IMR-90 (cell line): ENCODE measurements at regions of chr14 and their contacts with region 1.

Region 1: GRCh38 chr14:72904840-72905561 is 11.1 kb upstream of the DPF3 start:
- DNase-seq: peak; percentile 81
- ATAC-seq: peak; percentile 66
- H3K4me3 ChIP-seq: no peak overlapping the region
- H3K27ac ChIP-seq: no peak overlapping the region
- H3K4me1 ChIP-seq: peaks cover 18% of the 10 kb centered on the region
- H3K27me3 ChIP-seq: no peaks in the 10 kb centered on the region
- CTCF ChIP-seq: peak; percentile 95
- POLR2A ChIP-seq: no peak
- RAD21 ChIP-seq: peak; percentile 95

Region 2: DNA sequence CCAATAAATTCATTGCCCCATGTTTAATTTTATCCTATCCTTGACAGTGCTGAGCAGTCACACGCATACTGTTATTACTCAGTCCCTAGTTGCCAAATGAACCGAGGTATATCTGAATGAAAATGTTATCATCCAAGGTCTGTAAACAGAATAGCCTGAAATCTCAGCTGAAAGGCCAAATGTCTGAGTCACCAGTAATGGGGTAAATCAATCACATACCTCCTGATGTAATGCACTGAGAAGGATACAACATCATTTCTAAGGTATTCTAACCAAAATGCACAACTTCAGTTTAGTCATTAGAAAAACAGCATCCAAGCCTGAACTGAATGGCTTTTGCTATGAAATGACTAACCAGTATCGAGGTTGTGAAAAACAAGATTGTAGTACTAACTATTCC is 239.7 kb before region 1 on chr14:
- CTCF ChIA-PET with region 1: no interaction called
- POLR2A ChIA-PET with region 1: no interaction called
- dilution Hi-C with region 1: no loop called
- in situ Hi-C with region 1: no loop called
- intact Hi-C with region 1: loop called (anchors 5 kb)
- DNase-seq: peak; percentile 100
- ATAC-seq: peak; percentile 87
- H3K4me3 ChIP-seq: peak overlapping the region; percentile 33; the same call in 1 of the 2 replicates
- H3K27ac ChIP-seq: peak overlapping the region; percentile 82
- H3K4me1 ChIP-seq: peaks cover 23% of the 10 kb centered on the region
- H3K27me3 ChIP-seq: no peaks in the 10 kb centered on the region
- CTCF ChIP-seq: no peak
- POLR2A ChIP-seq: no peak
- RAD21 ChIP-seq: 0 out of 2 replicates have a peak, but pooled peaks have one; percentile 11

Region 3: DNA sequence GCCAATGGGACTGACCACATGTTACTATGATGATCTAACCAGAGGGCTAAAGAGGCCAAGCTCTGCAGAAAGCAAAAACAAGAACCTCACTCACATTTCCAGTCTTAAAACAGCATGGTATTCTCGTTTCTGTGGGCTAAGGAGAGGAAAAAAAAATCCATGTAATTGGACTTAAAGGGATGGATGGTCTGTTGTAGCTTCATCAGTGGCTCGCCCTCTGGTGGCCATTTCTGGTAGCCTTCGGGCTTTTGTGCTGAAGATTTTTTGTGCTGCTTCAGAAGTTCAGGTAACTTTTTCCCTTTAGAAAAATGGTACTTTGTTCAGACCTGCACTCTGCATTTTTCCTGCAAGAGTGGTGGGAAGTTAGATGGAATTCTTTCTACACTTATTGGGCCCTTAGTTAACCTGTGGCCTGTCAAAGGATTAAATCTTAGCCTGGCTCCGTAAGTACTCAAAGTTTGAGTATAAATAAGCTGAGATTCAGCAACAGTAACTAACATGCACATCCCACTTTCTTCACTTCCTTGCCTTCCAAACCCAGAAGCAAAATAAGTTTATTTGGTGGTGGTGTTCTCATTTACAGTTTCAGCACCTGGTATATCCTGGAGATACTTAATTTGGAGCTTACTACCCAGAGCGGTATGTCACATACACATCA is 43.6 kb after region 1 on chr14:
- CTCF ChIA-PET with region 1: interaction called, 5 read pairs
- POLR2A ChIA-PET with region 1: no interaction called
- dilution Hi-C with region 1: no loop called
- in situ Hi-C with region 1: no loop called
- intact Hi-C with region 1: loop called (anchors 1 kb)
- DNase-seq: peak; percentile 70
- ATAC-seq: peak; percentile 86
- H3K4me3 ChIP-seq: no peak overlapping the region
- H3K27ac ChIP-seq: no peak overlapping the region
- H3K4me1 ChIP-seq: 0 out of 2 replicates have a peak, but pooled peaks cover 4% of the 10 kb centered on the region
- H3K27me3 ChIP-seq: no peaks in the 10 kb centered on the region
- CTCF ChIP-seq: peak; percentile 86
- POLR2A ChIP-seq: no peak
- RAD21 ChIP-seq: peak; percentile 80

Region 4: GRCh38 chr14:73295198-73295796 is 390.3 kb after region 1 on chr14:
- CTCF ChIA-PET with region 1: no interaction called
- POLR2A ChIA-PET with region 1: no interaction called
- dilution Hi-C with region 1: no loop called
- in situ Hi-C with region 1: no loop called
- intact Hi-C with region 1: no loop called
- DNase-seq: peak; percentile 31
- ATAC-seq: no peak
- H3K4me3 ChIP-seq: no peak overlapping the region
- H3K27ac ChIP-seq: no peak overlapping the region
- H3K4me1 ChIP-seq: no peaks in the 10 kb centered on the region
- H3K27me3 ChIP-seq: no peaks in the 10 kb centered on the region
- CTCF ChIP-seq: peak; percentile 69
- POLR2A ChIP-seq: no peak
- RAD21 ChIP-seq: peak; percentile 55